ENCODE measurements at regions of chr2 and their contacts with region 1.

Region 1: DNA sequence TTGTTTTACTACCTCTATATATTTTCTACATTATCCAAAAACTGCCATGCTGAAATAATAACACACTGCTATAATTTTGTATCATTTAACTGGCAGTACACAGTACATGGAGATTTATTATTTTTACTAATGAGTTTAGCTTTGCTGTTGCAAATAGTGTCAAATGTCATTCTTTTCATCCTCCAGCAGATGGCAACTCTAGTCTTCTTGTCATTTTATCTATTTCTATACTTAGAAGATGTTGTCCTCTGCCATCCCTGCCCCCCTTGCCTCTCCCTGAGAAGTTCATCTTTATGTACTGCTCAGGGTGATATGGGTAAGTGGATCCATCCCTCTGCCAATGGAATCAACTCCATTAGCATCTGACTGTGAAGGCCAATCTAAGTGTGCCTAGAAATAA is 21.7 kb upstream of the LRRTM1 start:
- DNase-seq: no peak
- ATAC-seq: peak; percentile 45 to 47

Region 2: GRCh38 chr2:80073134-80073561 is 253.1 kb before region 1 on chr2:
- intact Hi-C with region 1: loop called in 1 of 2 experiments (anchors 10 kb)
- DNase-seq: no peak
- ATAC-seq: peak in 1 of 2 donors; percentile 54

Region 3: GRCh38 chr2:80429251-80429650 is 103.0 kb after region 1 on chr2:
- intact Hi-C with region 1: loop called in 1 of 2 experiments (anchors 5 kb)
- DNase-seq: no peak
- ATAC-seq: no peak

Region 4: DNA sequence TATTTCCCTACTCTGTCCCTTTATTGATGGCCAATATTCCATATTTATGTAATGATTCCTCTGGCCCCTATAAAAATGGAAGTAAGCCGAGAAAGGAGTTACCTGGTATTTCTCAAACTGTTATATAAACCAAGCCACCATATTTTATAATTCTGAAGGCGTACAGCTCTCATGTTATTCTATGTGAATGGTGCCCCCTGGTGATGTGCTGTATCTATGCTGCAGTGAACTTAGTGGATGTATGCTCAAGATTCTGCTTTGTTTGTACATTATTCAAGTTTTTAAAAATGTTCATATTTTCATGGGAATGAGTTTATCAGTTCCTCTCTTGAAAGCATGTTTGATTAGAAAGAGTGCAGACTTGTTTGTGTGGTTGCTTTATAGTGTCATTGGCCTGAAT is 172.9 kb after region 1 on chr2:
- intact Hi-C with region 1: loop called (anchors 2 to 5 kb)
- DNase-seq: peak; percentile 32
- ATAC-seq: peak; percentile 76 to 77